Posterior cingulate gyrus (tissue), 11 donors: ENCODE measurements at regions of chr9 and their contacts with region 1.

Region 1: GRCh38 chr9:136482793-136483588 is at the start of gene SEC16A:
- DNase-seq: peak; percentile 98 to 100 (median 100)

Region 2: GRCh38 chr9:136268318-136268717 is 214.7 kb before region 1 on chr9:
- intact Hi-C with region 1: no loop called
- DNase-seq: no peak

Region 3: DNA sequence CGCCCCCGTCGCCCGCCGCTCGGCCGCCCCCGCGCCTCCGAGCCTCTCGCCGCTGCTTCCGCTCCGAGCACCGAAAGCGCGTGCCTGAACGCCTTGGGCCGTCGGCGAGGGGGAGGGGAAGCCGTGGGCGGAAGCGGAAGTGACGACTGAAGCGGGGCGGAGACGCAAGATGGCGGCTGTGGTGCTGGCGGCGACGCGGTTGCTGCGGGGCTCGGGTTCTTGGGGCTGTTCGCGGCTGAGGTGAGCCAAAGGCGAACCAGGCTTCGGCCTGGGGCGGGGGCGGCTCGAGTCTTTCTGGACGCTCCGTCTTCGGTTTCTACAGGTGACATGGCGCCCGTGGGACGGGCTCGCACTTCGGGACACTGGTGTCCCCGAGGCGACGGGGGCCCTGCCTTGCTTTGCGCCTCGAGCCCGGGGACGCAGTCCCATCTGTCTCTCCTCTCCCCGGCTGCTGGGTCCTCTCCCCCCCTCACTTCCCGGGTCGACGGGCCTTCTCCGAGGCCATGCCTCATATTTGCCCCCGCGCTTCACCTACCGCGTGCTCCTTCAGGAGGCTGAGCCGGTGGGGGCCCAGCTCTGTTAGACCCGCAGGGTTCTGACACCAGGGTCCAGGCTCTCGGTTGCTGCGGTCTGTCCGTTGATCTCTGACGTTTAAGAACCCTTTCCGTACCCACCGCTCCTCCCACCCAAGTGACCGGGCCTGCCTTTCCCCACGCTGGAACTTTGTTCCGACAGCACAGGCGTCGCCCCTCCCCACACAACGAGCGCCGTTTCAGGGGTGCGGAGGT is 72.3 kb before region 1 on chr9 and contains the starts of genes ENTR1 and PMPCA:
- intact Hi-C with region 1: loop called (anchors 5 kb)
- DNase-seq: peak; percentile 85 to 99 (median 94)

Region 4: GRCh38 chr9:136422876-136423275 is 60.1 kb before region 1 on chr9:
- intact Hi-C with region 1: no loop called
- DNase-seq: peak in 1 of 10 donors; percentile 79

Region 5: DNA sequence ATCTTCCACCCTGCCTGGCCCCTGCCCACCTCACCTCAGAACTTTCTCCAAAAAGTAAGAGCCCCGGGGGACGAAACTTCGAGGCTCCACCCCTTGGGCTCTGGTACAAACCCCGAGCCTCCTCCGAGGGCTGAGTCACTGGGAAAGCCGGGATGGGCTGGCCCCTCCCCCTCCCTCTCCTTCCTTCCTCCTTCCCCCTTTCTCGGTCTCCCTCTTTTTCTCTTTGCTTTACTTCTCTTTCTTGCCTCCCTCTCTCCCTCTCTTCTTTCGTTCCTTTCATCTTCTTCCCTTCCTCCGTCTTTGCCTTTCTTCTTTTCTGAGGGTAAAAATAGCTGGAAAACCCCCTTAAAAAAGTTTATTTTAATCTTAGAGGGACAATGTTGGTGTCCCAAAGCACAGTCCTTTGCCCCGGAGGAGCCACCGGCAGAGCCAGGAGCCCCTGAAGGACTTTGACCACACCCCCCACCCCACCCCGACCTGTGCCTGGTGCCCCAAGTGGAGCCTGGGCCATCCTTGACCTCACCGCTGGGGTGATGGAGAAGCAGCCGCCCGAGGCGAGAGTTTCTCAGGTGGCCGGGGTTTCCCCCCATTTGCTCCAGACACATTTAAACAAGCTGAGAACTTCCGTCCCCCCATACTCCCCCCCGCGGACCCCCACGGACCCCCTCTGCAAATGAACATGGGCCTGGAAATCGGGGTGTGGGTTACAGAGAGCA is 68.6 kb after region 1 on chr9:
- intact Hi-C with region 1: loop called (anchors 5 kb)
- DNase-seq: no peak

Region 6: GRCh38 chr9:136625101-136626060 is 142.4 kb after region 1 on chr9:
- intact Hi-C with region 1: loop called (anchors 1 kb)
- DNase-seq: peak in 5 of 10 donors; percentile 50 to 93 (median 53)

Region 7: DNA sequence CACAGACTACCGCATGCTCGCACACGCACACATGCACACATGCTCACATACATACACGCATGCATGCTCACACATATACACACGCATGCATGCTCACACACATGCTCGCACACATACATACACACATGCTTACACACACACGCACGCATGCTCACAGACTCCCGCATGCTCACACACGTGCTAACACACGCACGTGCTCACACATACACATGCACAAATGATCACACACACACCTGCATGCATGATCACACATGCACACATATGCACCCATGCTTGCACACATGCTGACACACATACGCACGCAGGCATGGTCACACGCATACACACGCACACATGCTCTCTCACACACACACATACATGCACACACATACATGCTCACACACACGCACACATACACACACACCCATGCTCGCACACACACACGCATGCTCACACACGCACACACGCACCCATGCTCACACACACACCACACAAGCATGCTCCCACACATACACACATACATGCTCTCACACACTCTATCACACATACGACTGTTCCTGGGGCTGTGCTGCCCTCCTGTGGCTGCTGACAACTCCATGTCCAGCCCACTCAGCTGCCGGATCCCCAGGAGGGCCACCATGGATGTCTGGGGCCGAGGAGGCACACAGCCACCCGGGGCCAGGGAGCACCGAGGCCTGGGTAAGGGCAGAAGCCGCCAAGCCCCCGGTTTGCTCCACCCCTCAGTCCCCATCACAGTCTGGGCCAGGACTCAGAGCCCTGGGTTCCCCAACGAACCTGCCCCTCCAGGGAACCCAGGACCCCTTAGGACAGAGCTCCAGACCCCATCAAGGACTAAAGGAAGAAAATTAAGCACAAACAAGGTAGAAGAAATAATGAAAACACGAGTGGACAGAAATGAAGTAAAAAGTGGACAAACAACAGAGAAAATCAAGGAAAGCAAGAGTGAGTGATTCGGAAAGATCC is 148.3 kb after region 1 on chr9:
- intact Hi-C with region 1: loop called (anchors 1 kb)
- DNase-seq: peak; percentile 34 to 95 (median 73)